ENCODE measurements at regions of chr3 and their contacts with region 1.

Region 1: DNA sequence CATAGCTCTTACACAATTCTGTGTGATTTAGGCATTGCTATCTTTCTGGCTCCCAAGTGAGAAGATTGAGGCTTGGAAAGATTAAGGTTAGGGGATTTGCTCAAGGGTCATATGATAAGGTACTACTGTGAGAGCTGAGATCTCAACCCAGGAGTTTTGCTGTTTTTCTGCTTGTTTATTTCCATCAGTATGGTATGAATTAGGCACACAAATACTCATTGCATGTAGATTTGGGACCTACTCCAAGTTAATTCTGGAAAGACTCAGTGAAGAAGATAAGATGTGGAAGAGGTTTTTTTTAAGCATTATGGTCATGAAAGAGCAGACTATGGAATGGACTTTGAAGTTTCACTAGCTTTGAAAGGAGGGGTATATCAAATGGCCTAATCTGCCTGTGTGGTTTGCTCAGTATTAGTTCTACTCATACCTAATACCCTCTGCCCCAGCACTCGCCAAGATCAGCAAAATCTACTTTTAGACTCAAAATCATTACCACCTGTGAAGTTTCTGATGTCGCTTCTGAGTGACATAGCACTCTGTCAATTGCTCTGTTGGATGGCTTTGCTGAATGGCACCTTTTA is 12.5 kb downstream of the MBNL1 start:
- DNase-seq: no peak
- H3K4me3 ChIP-seq: no peak overlapping the region
- H3K27ac ChIP-seq: peak overlapping the region; percentile 17
- H3K4me1 ChIP-seq: peaks cover 40% of the 10 kb centered on the region
- H3K27me3 ChIP-seq: no peaks in the 10 kb centered on the region
- CTCF ChIP-seq: no peak

Region 2: DNA sequence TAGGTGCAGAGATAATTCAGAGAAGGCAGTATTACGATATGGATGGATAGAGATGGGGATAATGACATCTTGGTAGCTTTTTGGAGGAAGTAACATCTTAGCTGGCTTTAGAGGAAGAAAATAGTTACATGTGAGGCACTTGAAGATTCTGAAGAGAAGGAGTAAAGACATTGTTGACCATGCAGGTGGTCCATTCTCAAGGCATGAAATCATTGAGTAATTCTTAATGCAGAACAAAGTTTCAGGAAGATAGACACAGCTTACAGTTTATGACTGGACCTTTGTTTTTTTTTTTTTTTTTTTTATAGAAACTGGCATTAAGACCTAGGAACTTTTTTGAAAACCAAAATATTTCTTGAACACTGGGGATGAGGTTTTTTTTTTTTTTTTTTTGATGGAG is 15.7 kb after region 1 on chr3:
- CTCF ChIA-PET with region 1: no interaction called
- POLR2A ChIA-PET with region 1: interaction called, 11 read pairs
- intact Hi-C with region 1: no loop called
- DNase-seq: no peak
- H3K4me3 ChIP-seq: no peak overlapping the region
- H3K27ac ChIP-seq: no peak overlapping the region
- H3K4me1 ChIP-seq: peaks cover 28% of the 10 kb centered on the region
- H3K27me3 ChIP-seq: no peaks in the 10 kb centered on the region
- CTCF ChIP-seq: no peak

Region 3: DNA sequence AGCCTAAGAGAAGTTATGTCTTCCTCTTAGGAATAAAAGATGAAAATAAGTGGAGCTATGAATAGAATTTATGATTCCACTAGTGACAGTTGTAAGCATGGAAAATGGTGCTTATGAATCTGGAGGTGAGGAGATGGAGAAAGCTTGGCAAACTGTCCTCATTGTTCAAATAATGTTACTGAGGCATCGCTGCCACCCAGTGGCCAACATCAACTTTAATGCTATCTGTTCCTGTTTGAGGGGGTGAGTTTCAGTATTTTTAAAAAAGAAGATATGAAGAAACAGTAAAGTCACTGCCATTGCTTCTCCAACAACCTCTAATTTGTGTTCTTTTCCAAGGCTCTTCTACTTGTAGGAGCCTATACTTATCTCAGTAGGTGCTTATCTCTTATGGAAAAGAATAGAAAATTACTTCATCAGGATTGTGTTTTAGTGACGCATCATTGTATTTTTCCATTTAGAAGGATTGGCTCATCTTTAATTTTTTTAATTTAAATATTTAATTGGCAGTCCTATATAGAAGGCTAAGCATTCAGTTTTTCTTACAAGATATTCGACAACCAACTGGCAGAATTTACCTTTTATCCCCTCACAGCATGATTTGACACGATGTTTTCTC is 293.3 kb after region 1 on chr3:
- CTCF ChIA-PET with region 1: no interaction called
- POLR2A ChIA-PET with region 1: no interaction called
- intact Hi-C with region 1: no loop called
- DNase-seq: peak; percentile 76
- H3K4me3 ChIP-seq: no peak overlapping the region
- H3K27ac ChIP-seq: no peak overlapping the region
- H3K4me1 ChIP-seq: no peaks in the 10 kb centered on the region
- H3K27me3 ChIP-seq: no peaks in the 10 kb centered on the region
- CTCF ChIP-seq: peak; percentile 70

Region 4: GRCh38 chr3:152870027-152870426 is 588.8 kb after region 1 on chr3:
- CTCF ChIA-PET with region 1: no interaction called
- POLR2A ChIA-PET with region 1: no interaction called
- intact Hi-C with region 1: no loop called
- DNase-seq: no peak
- H3K4me3 ChIP-seq: no peak overlapping the region
- H3K27ac ChIP-seq: no peak overlapping the region
- H3K4me1 ChIP-seq: peaks cover 4% of the 10 kb centered on the region
- H3K27me3 ChIP-seq: no peaks in the 10 kb centered on the region
- CTCF ChIP-seq: no peak